Activated T-helper 1 cell treated with anti-CD3 and anti-CD28 coated beads, Interleukin-12 subunit alpha, Interleukin-12 subunit beta, Interleukin-2, Interleukin-4 antibody, amounts not matched to agents 30 ng/mL and 10 ng/mL and 1 ng/mL, durations not matched to agents 14 hours and 24 hours and 36 hours (primary cell): ENCODE measurements at regions of chr11 and their contacts with region 1.

Region 1: GRCh38 chr11:123069908-123070821 is 8.2 kb upstream of the HSPA8 start:
- DNase-seq: peak; percentile 44
- H3K4me3 Mint-ChIP-seq: peak overlapping the region; percentile 87
- H3K27ac Mint-ChIP-seq: peak overlapping the region; percentile 98
- H3K4me1 Mint-ChIP-seq: peaks cover 59% of the 10 kb centered on the region
- H3K27me3 Mint-ChIP-seq: no peaks in the 10 kb centered on the region

Region 2: DNA sequence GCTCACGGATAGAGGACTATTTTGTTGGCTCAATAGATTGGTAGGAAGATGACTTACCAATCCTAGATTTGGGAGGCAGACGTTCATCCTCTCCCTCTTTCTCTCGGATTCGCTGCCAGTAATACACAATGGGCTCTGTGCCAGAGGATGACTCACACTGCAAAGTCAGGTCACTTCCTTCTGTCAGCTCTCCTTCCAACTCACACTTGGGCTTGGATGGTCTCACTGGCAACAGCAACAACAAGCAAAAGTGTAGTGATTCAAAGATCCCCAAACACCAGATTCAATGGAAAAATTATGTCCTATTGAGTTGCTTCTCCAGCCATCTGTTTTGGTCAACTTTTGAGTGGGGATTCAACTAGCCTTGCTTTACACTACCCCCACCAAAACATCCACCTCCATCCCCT is 13.5 kb after region 1 on chr11:
- intact Hi-C with region 1: loop called (anchors 1 kb)
- DNase-seq: peak; percentile 70
- H3K4me3 Mint-ChIP-seq: peak overlapping the region; percentile 55
- H3K27ac Mint-ChIP-seq: peak overlapping the region; percentile 79
- H3K4me1 Mint-ChIP-seq: peaks cover 50% of the 10 kb centered on the region
- H3K27me3 Mint-ChIP-seq: no peaks in the 10 kb centered on the region

Region 3: DNA sequence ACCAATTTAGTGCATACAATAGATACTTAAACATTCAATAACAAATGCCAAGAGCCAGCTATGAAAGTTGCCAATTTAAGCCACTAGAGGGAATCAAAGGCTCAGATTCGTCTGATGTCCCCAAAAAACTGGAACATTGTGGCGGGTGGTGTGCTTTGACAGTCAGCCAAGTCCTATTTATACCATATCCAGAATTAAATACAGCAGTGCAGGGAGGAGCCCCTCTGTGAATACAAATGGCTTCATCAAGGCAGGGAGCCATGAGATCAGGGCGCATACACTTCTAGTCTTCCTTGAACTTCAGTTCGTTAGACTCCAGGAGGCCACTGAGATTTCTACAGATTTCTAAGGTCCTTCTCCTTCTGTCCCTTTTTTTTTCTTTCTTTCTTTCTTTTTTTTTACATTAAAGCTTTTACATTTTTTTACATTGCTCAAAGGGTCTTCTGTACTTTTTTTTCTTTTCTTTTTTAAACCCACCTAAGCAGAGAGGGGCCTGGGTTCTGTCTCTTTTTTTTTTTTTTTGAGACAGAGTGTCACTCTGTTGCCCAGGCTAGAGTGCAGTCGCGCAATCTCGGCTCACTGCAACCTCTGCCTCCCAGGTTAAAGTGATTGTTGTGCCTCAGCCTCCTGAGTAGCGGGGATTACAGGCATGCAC is 33.3 kb after region 1 on chr11:
- intact Hi-C with region 1: loop called (anchors 1 kb)
- DNase-seq: peak; percentile 14
- H3K4me3 Mint-ChIP-seq: no peak overlapping the region
- H3K27ac Mint-ChIP-seq: no peak overlapping the region
- H3K4me1 Mint-ChIP-seq: peaks cover 30% of the 10 kb centered on the region
- H3K27me3 Mint-ChIP-seq: peaks cover 14% of the 10 kb centered on the region